MCF 10A (cell line): ENCODE measurements at regions of chr1 and their contacts with region 1.

Region 1: DNA sequence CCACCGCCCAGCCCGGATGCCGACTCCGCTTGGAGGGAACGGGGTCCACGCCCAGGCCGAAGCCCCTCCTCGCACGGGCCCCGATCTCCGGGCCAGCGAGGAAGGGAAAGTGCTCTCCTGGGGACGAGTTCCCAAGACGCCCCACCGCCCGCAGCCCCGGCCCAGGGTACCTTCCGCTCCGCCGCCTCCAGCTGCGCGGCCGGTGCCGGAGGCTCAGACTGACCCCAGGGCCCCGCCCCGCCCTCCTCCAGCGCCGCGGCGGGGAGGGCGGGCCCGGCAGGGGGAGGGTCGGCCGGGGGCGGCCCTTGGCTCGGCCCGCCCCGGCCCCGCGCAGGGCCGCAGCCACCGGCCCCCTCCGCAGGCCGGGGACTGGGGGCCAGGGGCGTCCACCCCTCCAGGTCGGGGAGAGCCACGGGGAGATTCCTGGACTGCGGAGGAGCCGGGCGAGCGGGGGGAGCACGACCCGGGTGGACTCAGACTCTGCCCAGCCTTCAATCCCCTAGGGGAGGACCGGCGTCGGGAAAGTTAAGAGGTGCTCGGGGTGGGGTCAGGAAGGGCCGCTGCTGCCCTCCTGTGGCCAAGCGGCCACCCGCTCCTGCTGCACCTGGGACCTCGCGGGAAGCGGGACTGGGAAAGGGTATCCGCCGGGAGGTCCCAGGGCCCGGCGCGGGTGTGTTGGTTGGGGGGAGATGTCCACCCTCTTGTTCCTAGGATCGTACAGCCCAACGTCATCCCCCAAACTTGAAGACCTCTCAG is at the start of gene RHOC:
- DNase-seq: peak; percentile 91
- H3K4me3 Mint-ChIP-seq: peak within 1 kb of the TSS; percentile 78
- H3K27ac Mint-ChIP-seq: peak within 1 kb of the TSS; percentile 91
- H3K4me1 Mint-ChIP-seq: peaks cover 37% of the 10 kb centered on the region
- H3K27me3 Mint-ChIP-seq: no peaks in the 10 kb centered on the region
- CTCF ChIP-seq: peak; percentile 86
- total RNA-seq, gene RHOC: 253 and 294 TPM in 2 replicates

Region 2: DNA sequence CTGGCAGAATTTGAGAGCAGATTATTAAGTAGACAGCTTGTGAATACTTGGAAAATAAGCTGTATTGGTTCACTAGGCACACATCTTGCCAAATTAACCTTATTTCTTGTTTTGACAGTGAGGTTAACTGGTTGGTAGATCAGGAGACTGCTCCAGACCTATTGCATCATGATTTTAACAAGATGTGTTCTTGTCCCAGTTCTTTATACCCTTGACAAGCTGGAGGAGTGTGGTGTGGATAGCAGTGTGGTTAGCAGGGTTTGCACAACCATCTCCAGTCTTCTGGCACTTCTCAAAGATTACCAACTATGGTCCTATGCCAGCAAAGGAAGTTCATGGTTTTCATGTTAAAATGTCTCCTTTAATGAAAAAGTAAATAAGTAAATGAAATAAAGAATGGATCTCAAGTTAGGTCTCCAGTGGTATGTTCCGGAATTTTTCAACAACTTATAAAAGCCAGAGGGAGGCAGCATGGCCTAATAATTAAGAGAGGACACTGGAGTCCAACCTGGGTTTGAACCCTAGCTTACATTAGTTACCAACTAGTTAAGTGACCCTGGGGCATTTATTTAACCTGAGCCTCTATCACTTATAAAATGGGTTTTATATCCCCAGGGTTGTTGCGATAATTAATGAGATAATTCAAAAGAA is 917.3 kb before region 1 on chr1:
- CTCF ChIA-PET with region 1: no interaction called
- POLR2A ChIA-PET with region 1: no interaction called
- intact Hi-C with region 1: no loop called
- DNase-seq: peak; percentile 27
- H3K4me3 Mint-ChIP-seq: no peak overlapping the region
- H3K27ac Mint-ChIP-seq: no peak overlapping the region
- H3K4me1 Mint-ChIP-seq: no peaks in the 10 kb centered on the region
- H3K27me3 Mint-ChIP-seq: peaks cover 71% of the 10 kb centered on the region
- CTCF ChIP-seq: peak; percentile 9

Region 3: DNA sequence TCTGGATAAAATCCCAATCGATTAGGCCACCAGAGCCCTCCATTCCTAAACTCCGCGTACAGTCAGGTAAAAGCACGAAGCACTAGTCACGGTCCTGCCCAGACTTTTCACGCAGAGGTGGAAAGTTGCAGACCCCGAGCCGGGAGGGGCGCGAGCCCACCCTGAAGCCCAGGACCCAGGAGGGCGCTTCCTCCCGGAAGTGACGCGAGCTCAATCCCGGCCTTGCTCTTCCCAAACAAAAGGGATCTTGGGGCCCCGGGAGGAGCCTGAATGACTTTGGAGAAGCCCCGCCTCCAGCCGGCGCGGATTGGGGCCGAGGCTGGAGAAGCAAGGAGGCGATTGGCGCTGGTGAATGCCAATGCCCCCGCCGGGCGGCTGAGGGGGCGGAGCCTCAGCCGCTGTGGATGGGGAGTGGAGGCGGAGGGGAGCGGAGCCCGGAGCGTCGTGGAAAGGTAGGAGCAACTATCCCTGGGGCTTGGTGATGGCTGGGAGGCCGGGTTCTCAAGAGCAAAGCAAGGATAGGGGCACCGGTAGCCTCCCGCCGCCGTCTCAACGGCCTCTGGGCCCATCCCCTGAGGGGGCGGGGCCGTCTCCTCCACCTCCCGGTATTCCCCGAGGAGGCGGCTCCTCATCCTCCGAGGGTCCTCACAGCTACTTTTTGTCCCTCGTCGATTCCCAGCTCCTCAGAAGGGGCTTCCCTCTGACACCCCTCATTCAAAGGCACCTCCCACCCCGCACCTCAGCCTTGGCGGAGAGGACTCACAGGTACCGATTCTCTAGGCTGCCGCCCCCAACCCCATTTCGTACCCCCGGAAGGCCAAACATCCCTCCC is 311.0 kb before region 1 on chr1 and contains the start of gene CTTNBP2NL:
- CTCF ChIA-PET with region 1: interaction called, 48 read pairs
- POLR2A ChIA-PET with region 1: interaction called, 38 read pairs
- intact Hi-C with region 1: no loop called
- DNase-seq: peak; percentile 97
- H3K4me3 Mint-ChIP-seq: peak within 1 kb of the TSS; percentile 98
- H3K27ac Mint-ChIP-seq: peak within 1 kb of the TSS; percentile 98
- H3K4me1 Mint-ChIP-seq: peaks cover 53% of the 10 kb centered on the region
- H3K27me3 Mint-ChIP-seq: no peaks in the 10 kb centered on the region
- CTCF ChIP-seq: no peak
- total RNA-seq, gene CTTNBP2NL: 41.3 and 48.8 TPM in 2 replicates

Region 4: DNA sequence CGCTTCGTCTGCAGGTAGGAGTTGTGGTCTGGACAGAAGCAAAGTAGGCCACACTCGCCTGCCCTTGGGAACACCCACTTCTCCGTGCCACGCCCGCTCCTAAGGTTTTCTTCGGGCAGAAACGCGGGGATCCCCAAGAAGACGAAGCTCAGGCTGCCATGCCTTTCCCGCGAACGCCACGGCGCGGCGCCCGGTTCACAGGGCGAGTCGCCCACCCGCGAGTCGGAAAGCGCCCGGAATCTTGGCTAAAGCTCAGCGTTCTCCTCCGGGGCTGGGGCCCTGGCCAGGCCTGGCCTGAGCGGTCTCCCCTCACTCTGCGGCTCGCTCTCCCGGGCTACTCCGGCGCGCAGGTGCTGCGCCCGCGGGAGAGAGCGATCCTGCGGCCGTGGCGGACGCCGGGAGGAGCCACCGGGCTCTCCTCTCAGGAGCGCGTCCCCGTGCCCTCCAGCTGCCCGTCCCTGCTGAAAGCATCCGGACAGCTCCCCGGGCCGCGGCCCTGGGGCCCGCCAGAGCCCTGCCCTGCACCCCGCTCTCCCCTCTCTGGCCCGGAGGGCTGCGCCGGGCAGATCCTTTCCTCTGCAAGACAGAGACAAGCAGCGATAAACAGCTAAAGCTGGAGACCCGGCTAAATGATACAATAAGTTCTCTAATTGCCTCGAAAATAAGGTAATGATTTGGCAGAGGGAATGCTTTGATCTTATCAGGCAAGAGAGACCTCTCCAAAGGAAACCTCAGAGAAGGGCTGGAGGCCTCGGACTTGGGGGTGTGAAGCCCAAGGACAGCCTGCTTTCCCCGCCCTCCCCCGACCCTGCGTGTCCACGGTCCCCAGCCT is 205.1 kb before region 1 on chr1:
- CTCF ChIA-PET with region 1: interaction called, 4 read pairs
- POLR2A ChIA-PET with region 1: interaction called, 4 read pairs
- intact Hi-C with region 1: loop called (anchors 1 kb)
- DNase-seq: peak; percentile 69
- H3K4me3 Mint-ChIP-seq: peak overlapping the region; percentile 65
- H3K27ac Mint-ChIP-seq: no peak overlapping the region
- H3K4me1 Mint-ChIP-seq: no peaks in the 10 kb centered on the region
- H3K27me3 Mint-ChIP-seq: peaks cover 23% of the 10 kb centered on the region
- CTCF ChIP-seq: peak; percentile 56

Region 5: DNA sequence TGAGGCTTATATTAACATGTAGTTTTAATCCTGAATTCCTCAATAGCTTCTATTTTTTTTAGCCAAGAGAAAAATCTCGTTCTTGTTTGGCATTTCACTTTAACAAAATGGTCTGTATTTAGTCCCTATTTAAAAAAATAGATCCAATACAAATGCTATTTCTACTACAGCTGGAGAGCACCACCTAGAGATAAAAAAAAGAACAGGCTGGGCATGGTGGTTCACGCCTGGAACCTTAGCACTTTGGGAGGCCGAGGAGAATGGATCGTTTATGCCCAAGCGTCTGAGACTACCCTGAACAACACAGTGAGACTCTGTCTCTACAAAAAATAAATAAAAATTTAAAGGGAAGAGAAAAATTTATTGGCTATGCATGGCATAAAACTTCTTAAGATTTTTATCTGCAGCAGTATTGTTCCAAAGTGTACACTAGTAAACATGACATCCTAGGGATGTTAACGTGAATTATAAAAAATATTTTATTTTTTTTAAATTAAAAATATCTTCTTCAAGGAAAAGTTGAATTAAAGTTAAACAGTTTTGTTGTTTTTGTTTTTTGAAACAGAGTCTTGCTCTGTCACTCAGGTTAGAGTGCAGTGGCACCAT is 92.5 kb before region 1 on chr1:
- CTCF ChIA-PET with region 1: interaction called, 13 read pairs
- POLR2A ChIA-PET with region 1: interaction called, 40 read pairs
- intact Hi-C with region 1: no loop called
- DNase-seq: peak; percentile 49
- H3K4me3 Mint-ChIP-seq: no peak overlapping the region
- H3K27ac Mint-ChIP-seq: no peak overlapping the region
- H3K4me1 Mint-ChIP-seq: peaks cover 6% of the 10 kb centered on the region
- H3K27me3 Mint-ChIP-seq: no peaks in the 10 kb centered on the region
- CTCF ChIP-seq: peak; percentile 55

Region 6: DNA sequence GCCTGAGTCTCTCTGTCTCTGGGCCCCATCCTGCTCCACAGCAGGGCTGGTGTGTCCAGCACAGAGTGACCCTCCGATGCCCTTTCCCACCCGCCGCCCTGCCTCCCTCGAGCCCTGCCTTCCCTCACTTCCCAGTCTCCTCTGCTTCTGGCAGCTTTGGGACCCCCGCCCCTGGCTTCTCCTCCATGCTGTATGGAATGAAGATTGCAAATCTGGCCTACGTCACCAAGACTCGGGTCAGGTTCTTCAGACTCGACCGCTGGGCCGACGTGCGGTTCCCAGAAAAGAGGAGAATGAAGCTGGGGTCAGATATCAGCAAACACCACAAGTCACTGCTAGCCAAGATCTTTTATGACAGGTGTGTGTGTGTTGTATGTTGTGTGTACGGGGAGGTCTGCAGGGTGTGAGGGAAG is 18.3 kb before region 1 on chr1:
- CTCF ChIA-PET with region 1: interaction called, 8 read pairs
- POLR2A ChIA-PET with region 1: interaction called, 75 read pairs
- intact Hi-C with region 1: loop called (anchors 1 kb)
- DNase-seq: no peak
- H3K4me3 Mint-ChIP-seq: no peak overlapping the region
- H3K27ac Mint-ChIP-seq: peak overlapping the region; percentile 96
- H3K4me1 Mint-ChIP-seq: peaks cover 31% of the 10 kb centered on the region
- H3K27me3 Mint-ChIP-seq: no peaks in the 10 kb centered on the region
- CTCF ChIP-seq: no peak

Region 7: GRCh38 chr1:112727716-112728115 is 20.6 kb after region 1 on chr1:
- CTCF ChIA-PET with region 1: no interaction called
- POLR2A ChIA-PET with region 1: no interaction called
- intact Hi-C with region 1: no loop called
- DNase-seq: no peak
- H3K4me3 Mint-ChIP-seq: no peak overlapping the region
- H3K27ac Mint-ChIP-seq: no peak overlapping the region
- H3K4me1 Mint-ChIP-seq: no peaks in the 10 kb centered on the region
- H3K27me3 Mint-ChIP-seq: no peaks in the 10 kb centered on the region
- CTCF ChIP-seq: no peak

Region 8: DNA sequence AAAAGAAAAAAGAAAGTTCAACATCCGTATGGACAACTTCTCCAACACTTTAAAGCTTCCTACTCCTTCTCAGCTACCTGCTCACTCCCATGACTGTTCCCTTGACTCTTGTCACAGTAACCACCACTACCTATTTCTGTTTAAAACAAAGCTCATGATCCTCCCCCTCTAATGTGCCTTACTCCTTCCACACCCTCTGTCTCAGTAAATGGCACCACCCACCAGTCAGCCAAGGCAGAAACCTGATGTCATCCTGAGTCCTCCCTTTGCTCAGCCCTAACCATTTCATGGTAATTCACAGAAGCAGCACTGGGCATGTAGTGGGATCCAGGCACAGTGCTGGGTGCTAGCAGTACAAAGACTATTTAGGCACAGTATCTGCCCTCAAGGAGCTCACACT is 71.1 kb after region 1 on chr1:
- CTCF ChIA-PET with region 1: no interaction called
- POLR2A ChIA-PET with region 1: no interaction called
- intact Hi-C with region 1: no loop called
- DNase-seq: no peak
- H3K4me3 Mint-ChIP-seq: no peak overlapping the region
- H3K27ac Mint-ChIP-seq: no peak overlapping the region
- H3K4me1 Mint-ChIP-seq: no peaks in the 10 kb centered on the region
- H3K27me3 Mint-ChIP-seq: no peaks in the 10 kb centered on the region
- CTCF ChIP-seq: no peak